Activated T-helper 1 cell treated with anti-CD3 and anti-CD28 coated beads, Interleukin-12 subunit alpha, Interleukin-12 subunit beta, Interleukin-2, Interleukin-4 antibody, amounts not matched to agents 30 ng/mL and 10 ng/mL and 1 ng/mL, durations not matched to agents 14 hours and 24 hours and 36 hours (primary cell): ENCODE measurements at regions of chr2 and their contacts with region 1.

Region 1: GRCh38 chr2:219388127-219388844 is 574 bp upstream of the DNPEP start:
- DNase-seq: peak; percentile 95
- H3K4me3 Mint-ChIP-seq: peak overlapping the region; percentile 97
- H3K27ac Mint-ChIP-seq: peak overlapping the region; percentile 67
- H3K4me1 Mint-ChIP-seq: peaks cover 6% of the 10 kb centered on the region
- H3K27me3 Mint-ChIP-seq: peaks cover 23% of the 10 kb centered on the region

Region 2: DNA sequence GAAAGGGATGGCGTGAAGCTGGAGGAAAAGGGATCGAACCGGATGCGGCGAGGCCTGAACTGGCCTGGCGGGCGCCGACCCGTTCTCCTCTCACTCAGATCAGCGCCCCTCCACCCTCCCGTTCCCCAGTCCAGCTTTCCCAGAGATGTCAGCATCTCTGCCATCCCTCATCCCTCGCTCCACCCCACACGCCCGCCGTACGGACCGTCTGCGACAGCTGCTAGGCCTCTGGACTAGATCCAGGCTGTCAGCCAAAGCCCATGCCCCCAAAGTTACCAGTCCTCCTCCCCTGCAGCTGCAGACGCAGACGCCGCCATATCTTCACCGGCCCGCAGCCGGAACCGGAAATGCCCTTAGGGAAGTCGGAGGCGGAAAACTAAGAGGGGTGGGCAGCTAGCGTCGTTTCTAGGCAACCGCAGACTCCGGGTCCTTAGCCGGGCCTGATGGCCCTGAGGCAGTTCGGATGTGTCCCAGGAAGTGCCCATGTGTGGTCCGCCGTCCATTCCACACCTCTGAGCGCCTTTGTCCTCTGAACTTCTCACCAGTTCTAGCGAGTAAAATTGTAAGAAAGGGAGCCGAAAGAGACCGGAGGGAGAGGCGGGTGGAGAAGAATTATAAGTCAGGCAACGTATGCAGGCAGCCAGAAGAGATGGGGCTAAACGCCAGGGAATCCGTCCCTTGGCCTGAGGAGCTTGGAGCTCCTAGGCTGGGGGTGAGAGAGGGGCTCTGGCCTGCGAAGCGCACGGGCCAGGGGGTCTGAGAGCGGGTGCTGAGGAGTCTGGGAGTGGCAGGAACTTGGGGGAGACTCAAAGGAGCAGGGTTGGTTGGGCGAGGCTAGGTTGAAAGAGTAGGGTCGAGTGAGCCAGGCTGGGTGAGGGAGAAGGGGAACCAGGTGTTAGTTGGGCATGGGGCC is 716.4 kb before region 1 on chr2 and contains the starts of genes RNF25 and STK36:
- intact Hi-C with region 1: loop called (anchors 5 kb)
- DNase-seq: peak; percentile 77
- H3K4me3 Mint-ChIP-seq: peak within 1 kb of the TSS; percentile 100
- H3K27ac Mint-ChIP-seq: peak within 1 kb of the TSS; percentile 93
- H3K4me1 Mint-ChIP-seq: peaks cover 22% of the 10 kb centered on the region
- H3K27me3 Mint-ChIP-seq: no peaks in the 10 kb centered on the region
- total RNA-seq, gene RNF25: 29.1 and 31.6 TPM in 2 replicates
- total RNA-seq, gene STK36: 15.9 TPM in 2 replicates

Region 3: GRCh38 chr2:219206442-219207253 is 181.6 kb before region 1 on chr2 and contains the start of gene ZFAND2B:
- intact Hi-C with region 1: loop called (anchors 1 kb)
- DNase-seq: peak; percentile 96
- H3K4me3 Mint-ChIP-seq: peak within 1 kb of the TSS; percentile 92
- H3K27ac Mint-ChIP-seq: peak within 1 kb of the TSS; percentile 99
- H3K4me1 Mint-ChIP-seq: peaks cover 40% of the 10 kb centered on the region
- H3K27me3 Mint-ChIP-seq: no peaks in the 10 kb centered on the region
- total RNA-seq, gene ZFAND2B: 35.0 and 41.3 TPM in 2 replicates

Region 4: GRCh38 chr2:219278655-219279516 is 109.4 kb before region 1 on chr2 and contains the start of gene DNAJB2:
- intact Hi-C with region 1: loop called (anchors 1 kb)
- DNase-seq: peak; percentile 99
- H3K4me3 Mint-ChIP-seq: peak within 1 kb of the TSS; percentile 94
- H3K27ac Mint-ChIP-seq: peak within 1 kb of the TSS; percentile 99
- H3K4me1 Mint-ChIP-seq: peaks cover 45% of the 10 kb centered on the region
- H3K27me3 Mint-ChIP-seq: peaks cover under 1% of the 10 kb centered on the region
- total RNA-seq, gene DNAJB2: 40.8 and 45.3 TPM in 2 replicates

Region 5: DNA sequence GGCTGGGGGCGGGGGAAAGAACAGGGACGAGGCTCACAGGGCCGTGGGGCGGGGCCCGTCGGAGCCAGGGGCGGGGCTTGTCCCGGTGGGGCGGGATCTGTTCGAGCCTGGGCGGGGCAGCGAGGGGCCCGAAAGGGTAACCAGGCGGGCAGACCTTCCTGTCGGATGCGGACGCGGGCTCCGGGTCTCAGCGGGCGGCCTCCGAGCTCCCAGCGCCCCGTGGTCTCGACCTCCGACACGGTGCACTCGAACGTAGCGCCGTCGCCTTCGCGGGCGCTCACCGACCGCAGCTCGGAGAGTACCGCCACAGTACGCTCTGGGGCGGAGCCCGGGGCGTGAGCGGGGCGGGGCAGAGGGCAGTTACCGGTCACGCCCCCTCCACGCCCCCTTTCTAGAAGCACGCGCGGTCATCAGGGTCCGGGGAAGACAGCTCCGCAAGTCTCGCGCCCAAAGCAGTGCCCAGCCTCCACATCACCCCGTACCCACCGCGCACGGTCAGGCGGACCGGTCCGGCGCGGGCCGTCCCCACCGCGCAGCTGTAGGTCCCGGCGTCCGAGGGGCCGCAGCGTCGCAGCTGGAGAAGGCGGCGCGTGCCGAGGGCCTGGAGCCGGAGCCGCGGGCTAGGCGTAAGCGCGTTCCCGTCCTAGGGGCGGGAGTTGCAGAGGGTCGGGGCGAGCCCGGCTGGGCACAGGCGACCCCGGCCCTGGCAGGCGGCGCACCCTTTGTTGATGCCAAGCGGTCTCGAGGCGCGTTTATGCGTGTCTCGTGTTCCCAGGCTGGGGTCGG is 164.3 kb after region 1 on chr2:
- intact Hi-C with region 1: loop called (anchors 1 kb)
- DNase-seq: peak; percentile 80
- H3K4me3 Mint-ChIP-seq: peak overlapping the region; percentile 84
- H3K27ac Mint-ChIP-seq: no peak overlapping the region
- H3K4me1 Mint-ChIP-seq: no peaks in the 10 kb centered on the region
- H3K27me3 Mint-ChIP-seq: peaks cover 27% of the 10 kb centered on the region